ENCODE measurements at regions of chr11 and their contacts with region 1.

Region 1: GRCh38 chr11:64131683-64132190 is 34.2 kb downstream of the MACROD1 start:
- DNase-seq: no peak
- H3K4me3 ChIP-seq: no peak overlapping the region
- H3K27ac ChIP-seq: no peak overlapping the region
- H3K4me1 ChIP-seq: no peaks in the 10 kb centered on the region
- H3K27me3 ChIP-seq: peaks cover 10% of the 10 kb centered on the region
- CTCF ChIP-seq: no peak

Region 2: DNA sequence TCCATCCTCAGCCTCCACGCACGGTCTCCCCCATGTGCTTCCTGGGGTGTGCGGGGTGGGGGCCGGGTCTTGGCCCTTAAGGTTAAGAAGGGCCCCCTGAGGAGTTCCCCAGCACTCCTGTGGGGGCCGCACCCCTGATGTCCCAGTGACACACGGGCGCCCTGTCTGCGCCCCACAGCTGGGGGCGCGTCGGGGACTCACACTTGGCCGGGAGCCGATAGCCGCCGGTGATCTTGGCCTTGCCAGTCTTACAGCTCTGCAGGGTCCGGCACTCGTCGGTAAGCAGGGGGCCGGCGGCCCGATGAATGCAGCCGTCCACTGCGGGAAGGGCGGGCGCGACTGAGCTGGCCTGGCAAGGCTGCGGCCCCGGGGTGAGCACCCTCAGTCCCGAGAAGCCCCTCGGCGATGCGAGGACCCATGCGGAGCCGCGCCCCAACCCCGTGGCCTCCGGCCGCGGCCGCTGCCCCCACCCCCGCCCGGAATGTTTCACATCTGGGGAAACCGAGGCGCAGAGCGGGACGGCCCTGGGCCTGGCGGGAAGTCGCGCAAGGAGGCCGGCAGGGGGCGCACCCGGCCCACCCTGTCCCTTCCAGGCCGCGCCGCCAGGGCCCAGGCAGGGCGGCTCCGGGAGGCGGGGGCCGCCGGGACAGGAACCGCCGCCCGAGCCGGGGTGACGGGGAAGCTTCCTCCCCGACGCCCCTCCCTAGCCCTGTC is 131.6 kb before region 1 on chr11:
- dilution Hi-C with region 1: loop called (anchors 10 kb)
- DNase-seq: no peak
- H3K4me3 ChIP-seq: peak overlapping the region in 1 of 3 experiments; percentile 12
- H3K27ac ChIP-seq: no peak overlapping the region
- H3K4me1 ChIP-seq: peaks cover 10% of the 10 kb centered on the region
- H3K27me3 ChIP-seq: no peaks in the 10 kb centered on the region
- CTCF ChIP-seq: peak; percentile 12 to 85 (median 67)

Region 3: DNA sequence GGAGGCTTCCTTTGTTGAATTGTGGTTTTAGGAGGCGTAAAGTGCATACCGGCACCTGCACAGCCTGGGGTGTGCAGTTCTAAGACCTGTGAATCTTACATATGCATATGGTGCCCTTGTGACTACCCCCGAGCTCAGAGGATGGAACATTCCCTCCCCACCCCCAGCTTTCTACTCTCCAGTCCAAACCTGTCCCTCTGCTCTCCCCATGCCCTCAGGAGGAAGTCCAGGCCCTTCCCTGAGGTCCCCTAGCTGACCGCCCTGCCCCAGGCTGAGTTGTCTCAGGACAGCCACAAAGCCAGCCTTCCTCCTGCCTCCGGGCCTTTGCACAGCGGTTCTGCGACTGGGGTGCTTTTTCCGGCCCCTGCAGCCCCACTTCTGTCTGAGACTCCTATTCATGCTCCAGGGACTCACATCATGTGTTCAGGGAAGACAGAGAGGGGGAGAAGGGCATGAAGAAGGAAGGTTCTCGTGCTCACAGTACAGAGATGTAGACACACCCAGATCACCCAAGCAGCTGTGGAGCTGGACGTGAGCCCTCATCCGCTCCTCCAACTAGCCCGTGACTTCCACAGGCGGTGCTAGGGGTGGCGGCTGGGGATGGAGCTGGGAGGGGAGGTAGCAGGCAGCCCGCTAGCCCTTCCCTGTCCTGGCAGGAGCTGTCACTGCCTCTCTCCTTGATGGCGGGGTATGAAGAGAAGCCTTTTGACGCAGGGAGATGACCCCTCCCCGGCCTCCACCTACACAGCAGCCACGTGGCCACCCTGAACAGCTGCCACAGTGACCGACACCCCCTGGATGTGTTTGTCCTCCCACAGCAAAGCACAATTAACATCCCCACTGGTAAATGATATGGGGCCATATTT is 45.2 kb before region 1 on chr11:
- dilution Hi-C with region 1: no loop called
- DNase-seq: no peak
- H3K4me3 ChIP-seq: no peak overlapping the region
- H3K27ac ChIP-seq: no peak overlapping the region
- H3K4me1 ChIP-seq: peaks cover 5% of the 10 kb centered on the region
- H3K27me3 ChIP-seq: peaks cover 33% of the 10 kb centered on the region
- CTCF ChIP-seq: no peak

Region 4: DNA sequence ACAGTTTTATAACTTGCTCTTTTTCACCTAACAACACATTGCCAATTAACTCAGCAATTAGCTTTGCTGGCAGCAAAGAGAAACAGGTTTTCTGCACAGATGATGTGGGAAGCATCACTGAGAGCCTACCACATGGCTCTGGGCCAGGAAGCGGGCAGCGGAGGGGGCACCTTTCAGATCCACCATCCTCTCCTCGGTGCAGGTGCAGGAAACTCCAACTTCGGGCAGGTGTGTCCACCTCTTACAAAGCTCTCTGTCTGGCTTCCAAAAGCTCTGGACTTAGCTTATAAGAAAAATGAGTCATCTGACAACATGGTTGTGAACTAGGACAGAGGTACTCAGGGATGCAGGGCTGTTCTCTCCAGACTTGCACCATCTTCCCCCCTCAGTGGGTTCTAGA is 304.3 kb after region 1 on chr11:
- dilution Hi-C with region 1: no loop called
- DNase-seq: no peak
- H3K4me3 ChIP-seq: no peak overlapping the region
- H3K27ac ChIP-seq: no peak overlapping the region
- H3K4me1 ChIP-seq: peaks cover 11% of the 10 kb centered on the region
- H3K27me3 ChIP-seq: peaks cover 5% of the 10 kb centered on the region
- CTCF ChIP-seq: no peak